CD14-positive monocyte (primary cell): ENCODE measurements at regions of chr11 and their contacts with region 1.

Region 1: GRCh38 chr11:36361901-36362391 is 65.9 kb downstream of the PRR5L start:
- DNase-seq: peak; percentile 41 to 83 (median 71)
- H3K4me3 ChIP-seq: peak overlapping the region in 1 of 3 experiments; percentile 32
- H3K4me3 Mint-ChIP-seq: peak overlapping the region; percentile 38 to 77
- H3K27ac ChIP-seq: no peak overlapping the region
- H3K27ac Mint-ChIP-seq: peak overlapping the region in 4 of 7 donors; percentile 60 to 77 (median 68)
- H3K4me1 ChIP-seq: peaks cover 51 to 68% of the 10 kb centered on the region in 2 donors
- H3K4me1 Mint-ChIP-seq: peaks cover 60% of the 10 kb centered on the region
- H3K27me3 ChIP-seq: no peaks in the 10 kb centered on the region
- H3K27me3 Mint-ChIP-seq: peaks cover 2 to 12% (median 3%) of the 10 kb centered on the region in 3 donors
- CTCF ChIP-seq: no peak

Region 2: DNA sequence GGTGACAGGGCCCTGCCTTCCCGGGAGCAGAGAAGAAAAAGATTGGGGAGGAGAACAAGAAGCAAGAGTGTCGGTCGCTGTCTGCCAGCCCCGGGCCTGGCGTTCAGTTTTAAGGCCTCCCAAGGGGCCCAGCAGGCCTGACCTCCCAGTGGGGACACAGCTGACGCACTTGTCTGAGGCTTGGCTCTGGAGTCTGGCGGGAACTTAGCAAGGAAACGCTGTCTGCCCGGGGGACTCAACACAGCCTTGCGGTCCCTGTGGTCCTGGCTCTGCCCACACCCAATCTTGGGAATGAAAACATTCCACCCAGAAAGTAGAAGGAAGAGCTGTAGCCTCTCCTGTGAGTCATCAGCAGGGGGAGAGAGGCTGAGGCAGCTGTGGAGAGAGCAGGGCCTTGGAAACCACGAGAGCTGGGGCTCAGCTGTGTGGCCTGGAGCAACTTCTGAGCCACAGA is 93.7 kb after region 1 on chr11:
- intact Hi-C with region 1: loop called in 1 of 2 experiments (anchors 10 kb)
- DNase-seq: peak in 1 of 3 donors; percentile 14
- H3K4me3 ChIP-seq: no peak overlapping the region
- H3K4me3 Mint-ChIP-seq: no peak overlapping the region
- H3K27ac ChIP-seq: no peak overlapping the region
- H3K27ac Mint-ChIP-seq: peak overlapping the region in 4 of 7 donors; percentile 40 to 82 (median 75)
- H3K4me1 ChIP-seq: peaks cover 30 to 44% of the 10 kb centered on the region in 2 donors
- H3K4me1 Mint-ChIP-seq: peaks cover 48% of the 10 kb centered on the region
- H3K27me3 ChIP-seq: no peaks in the 10 kb centered on the region
- H3K27me3 Mint-ChIP-seq: peaks cover 0 to 4% (median 4%) of the 10 kb centered on the region in 3 donors
- CTCF ChIP-seq: no peak